A549 (cell line): ENCODE measurements at regions of chr6 and their contacts with region 1.

Region 1: DNA sequence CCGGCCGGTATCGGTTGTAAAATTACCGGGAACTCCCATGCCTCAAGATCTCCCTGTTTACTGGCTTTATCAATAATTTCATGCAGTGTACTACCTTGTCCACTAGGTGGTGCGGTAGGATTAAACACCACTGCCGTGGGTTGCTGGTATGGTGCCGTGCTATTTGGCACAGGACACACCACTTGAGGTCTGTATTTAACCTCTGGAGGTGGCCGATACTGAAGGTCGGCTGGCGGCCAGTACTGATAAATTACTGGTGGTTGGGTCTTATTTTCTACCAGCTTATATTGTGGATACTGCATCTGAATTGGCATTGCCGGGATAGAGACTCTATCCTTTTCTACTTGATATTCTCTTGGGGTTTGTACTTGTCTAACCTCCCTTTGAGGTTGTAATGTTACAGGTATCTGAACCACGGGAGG is 14.3 kb upstream of the PTCRA start:
- DNase-seq: peak; percentile 41 to 78
- ATAC-seq: peak; percentile 89 to 96
- H3K4me3 ChIP-seq: no peak overlapping the region
- H3K27ac ChIP-seq: no peak overlapping the region
- H3K4me1 ChIP-seq: peaks cover 3% of the 10 kb centered on the region; the same call in 1 of the 3 replicates
- CTCF ChIP-seq: peak; percentile 87
- EP300 ChIP-seq: no peak
- POLR2A ChIP-seq: no peak
- RAD21 ChIP-seq: peak; percentile 89 to 94

Region 2: GRCh38 chr6:42742116-42742894 is 159.2 kb before region 1 on chr6:
- CTCF ChIA-PET with region 1: no interaction called
- POLR2A ChIA-PET with region 1: no interaction called
- DNase-seq: no peak
- ATAC-seq: no peak
- H3K4me3 ChIP-seq: no peak overlapping the region
- H3K27ac ChIP-seq: no peak overlapping the region
- H3K4me1 ChIP-seq: peaks cover 8% of the 10 kb centered on the region; the same call in 1 of the 3 replicates
- CTCF ChIP-seq: no peak
- EP300 ChIP-seq: no peak
- POLR2A ChIP-seq: no peak
- RAD21 ChIP-seq: no peak

Region 3: DNA sequence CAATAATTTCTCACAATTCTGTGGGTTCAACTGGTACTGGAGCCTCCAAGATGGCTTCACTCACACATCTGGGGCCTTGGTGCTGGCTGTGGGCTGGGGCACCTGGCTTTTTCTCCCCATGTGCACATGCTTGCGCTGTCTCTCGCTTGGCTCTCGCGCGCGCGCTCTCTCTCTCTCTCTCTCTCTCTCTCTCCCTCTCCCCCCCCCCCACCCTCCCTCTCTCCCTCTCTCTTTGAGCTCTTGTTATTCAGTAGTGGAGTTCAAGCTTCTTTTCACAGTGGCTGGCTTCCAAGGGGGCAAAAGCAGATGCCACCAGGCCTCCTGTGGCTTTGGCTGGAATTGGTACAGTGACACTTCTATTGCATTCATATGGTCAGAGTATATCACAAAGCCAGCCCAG is 144.8 kb before region 1 on chr6:
- CTCF ChIA-PET with region 1: no interaction called
- POLR2A ChIA-PET with region 1: no interaction called
- DNase-seq: no peak
- ATAC-seq: no peak
- H3K4me3 ChIP-seq: no peak overlapping the region
- H3K27ac ChIP-seq: no peak overlapping the region
- H3K4me1 ChIP-seq: no peaks in the 10 kb centered on the region
- CTCF ChIP-seq: no peak
- EP300 ChIP-seq: no peak
- POLR2A ChIP-seq: no peak
- RAD21 ChIP-seq: no peak

Region 4: GRCh38 chr6:42928986-42929820 is 27.7 kb after region 1 on chr6 and contains the start of gene CNPY3:
- CTCF ChIA-PET with region 1: interaction called, 14 read pairs
- POLR2A ChIA-PET with region 1: no interaction called
- DNase-seq: peak; percentile 88 to 98
- ATAC-seq: peak; percentile 97
- H3K4me3 ChIP-seq: peak within 1 kb of the TSS; percentile 62
- H3K27ac ChIP-seq: peak within 1 kb of the TSS; percentile 84 to 97
- H3K4me1 ChIP-seq: peaks cover 11% of the 10 kb centered on the region; the same call in 2 of the 3 replicates
- CTCF ChIP-seq: no peak
- EP300 ChIP-seq: no peak
- POLR2A ChIP-seq: peak; percentile 51
- RAD21 ChIP-seq: no peak
- polyA plus RNA-seq, gene CNPY3: 28.2 and 30.3 TPM in 2 replicates

Region 5: GRCh38 chr6:43013843-43014433 is 112.4 kb after region 1 on chr6 and contains the starts of genes KLHDC3 and MEA1:
- CTCF ChIA-PET with region 1: interaction called, 16 read pairs
- POLR2A ChIA-PET with region 1: no interaction called
- DNase-seq: peak; percentile 94 to 99
- ATAC-seq: peak; percentile 94 to 96
- H3K4me3 ChIP-seq: peak within 1 kb of the TSS; percentile 92
- H3K27ac ChIP-seq: peak within 1 kb of the TSS; percentile 87 to 91
- H3K4me1 ChIP-seq: peaks cover 13% of the 10 kb centered on the region; the same call in 1 of the 3 replicates
- CTCF ChIP-seq: no peak
- EP300 ChIP-seq: no peak
- POLR2A ChIP-seq: 0 out of 2 replicates have a peak, but pooled peaks have one; percentile 36
- RAD21 ChIP-seq: no peak
- polyA plus RNA-seq, gene KLHDC3: 18.8 and 21.3 TPM in 2 replicates
- polyA plus RNA-seq, gene MEA1: 58.6 and 63.4 TPM in 2 replicates

Region 6: DNA sequence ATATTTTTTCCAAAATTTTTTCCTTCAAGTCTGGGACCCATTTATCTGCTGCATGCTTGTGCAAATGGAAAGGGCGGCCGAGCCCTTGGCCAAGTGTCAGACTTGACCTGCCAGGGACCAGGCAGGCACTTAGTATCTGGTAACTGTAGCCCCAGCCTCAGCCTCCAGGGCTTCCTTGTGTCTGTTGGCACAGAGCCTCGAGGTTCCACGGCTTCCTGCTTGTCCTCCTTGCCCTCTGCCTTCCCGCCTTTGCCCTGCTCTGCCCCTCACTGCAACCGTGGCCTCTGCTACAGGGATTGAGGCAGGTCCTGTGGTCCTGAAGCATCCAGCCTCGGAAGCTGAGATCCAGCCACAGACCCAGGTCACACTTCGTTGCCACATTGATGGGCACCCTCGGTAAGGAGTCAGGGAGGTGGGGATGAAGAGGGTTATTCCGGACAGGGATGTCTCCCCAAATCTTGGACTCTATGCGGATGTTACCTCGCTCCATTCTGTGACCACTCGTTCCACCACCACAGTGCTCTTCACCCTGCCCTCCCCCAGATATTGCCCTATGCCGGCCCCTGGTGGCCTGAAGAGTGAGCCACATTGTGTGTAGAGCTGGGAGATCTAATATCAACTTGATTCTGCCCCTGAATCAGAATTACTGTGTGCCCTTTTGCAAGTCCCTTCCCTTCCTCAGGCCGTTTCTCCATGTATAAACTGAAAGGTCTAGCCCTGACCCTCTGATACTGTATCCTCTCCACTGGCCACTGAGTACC is 228.1 kb after region 1 on chr6:
- CTCF ChIA-PET with region 1: interaction called, 10 read pairs
- POLR2A ChIA-PET with region 1: no interaction called
- DNase-seq: peak; percentile 26 to 37
- ATAC-seq: peak; percentile 88 to 97
- H3K4me3 ChIP-seq: no peak overlapping the region
- H3K27ac ChIP-seq: no peak overlapping the region
- H3K4me1 ChIP-seq: no peaks in the 10 kb centered on the region
- CTCF ChIP-seq: peak; percentile 32; the same call in 2 of the 3 replicates
- EP300 ChIP-seq: no peak
- POLR2A ChIP-seq: no peak
- RAD21 ChIP-seq: peak; percentile 42 to 58; a peak in 4 of 5 replicates